Panc1 (cell line): ENCODE measurements at regions of chr16 and their contacts with region 1.

Region 1: DNA sequence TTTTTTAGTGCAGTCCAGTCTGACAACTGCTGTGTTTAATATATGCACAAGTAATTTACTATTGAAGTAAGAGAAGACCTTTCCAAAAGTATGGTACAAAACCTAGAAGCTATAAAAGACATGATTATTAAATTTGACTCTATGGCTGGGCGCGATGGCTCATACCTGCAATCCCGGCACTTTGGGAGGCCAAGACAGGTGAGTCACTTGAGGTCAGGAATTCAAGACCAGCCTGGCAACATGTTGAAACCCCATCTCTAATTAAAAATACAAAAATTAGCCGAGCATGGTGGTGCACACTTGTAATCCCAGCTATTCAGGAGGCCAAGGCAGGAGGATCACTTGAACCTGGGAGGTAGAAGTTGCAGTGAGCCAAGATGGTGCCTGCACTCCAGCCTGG is 41.4 kb upstream of the VWA3A start:
- DNase-seq: no peak
- ATAC-seq: no peak
- H3K4me3 ChIP-seq: no peak overlapping the region
- H3K27ac ChIP-seq: no peak overlapping the region
- H3K4me1 ChIP-seq: no peaks in the 10 kb centered on the region
- H3K27me3 ChIP-seq: no peaks in the 10 kb centered on the region
- CTCF ChIP-seq: no peak

Region 2: DNA sequence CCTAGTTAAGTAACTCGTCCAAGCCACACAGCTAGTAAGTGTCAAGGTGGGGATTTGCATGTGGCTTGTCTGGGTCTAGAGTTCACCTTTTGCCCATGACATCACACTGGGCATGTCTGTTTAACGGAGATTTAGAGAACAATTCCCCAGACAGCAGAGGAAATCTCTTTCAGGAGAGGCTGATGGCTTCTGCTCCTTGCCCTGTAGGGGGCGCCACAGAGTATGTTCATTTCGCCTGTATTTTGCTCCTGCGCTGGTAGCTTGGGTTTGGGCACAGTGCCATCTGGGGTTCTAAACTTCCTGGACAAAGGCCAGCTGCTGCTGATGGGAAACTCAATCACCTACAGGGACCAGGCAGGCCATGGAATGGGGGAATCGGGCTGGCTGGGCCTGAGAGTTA is 366.8 kb before region 1 on chr16:
- CTCF ChIA-PET with region 1: interaction called, 16 read pairs
- POLR2A ChIA-PET with region 1: no interaction called
- in situ Hi-C with region 1: no loop called
- intact Hi-C with region 1: no loop called
- DNase-seq: no peak
- ATAC-seq: no peak
- H3K4me3 ChIP-seq: no peak overlapping the region
- H3K27ac ChIP-seq: no peak overlapping the region
- H3K4me1 ChIP-seq: no peaks in the 10 kb centered on the region
- H3K27me3 ChIP-seq: peaks cover 7% of the 10 kb centered on the region; the same call in 1 of the 2 replicates
- CTCF ChIP-seq: peak; percentile 84

Region 3: GRCh38 chr16:22063888-22064467 is 13.0 kb after region 1 on chr16:
- CTCF ChIA-PET with region 1: no interaction called
- POLR2A ChIA-PET with region 1: interaction called, 10 read pairs
- in situ Hi-C with region 1: no loop called
- intact Hi-C with region 1: no loop called
- DNase-seq: no peak
- ATAC-seq: no peak
- H3K4me3 ChIP-seq: no peak overlapping the region
- H3K27ac ChIP-seq: no peak overlapping the region
- H3K4me1 ChIP-seq: no peaks in the 10 kb centered on the region
- H3K27me3 ChIP-seq: no peaks in the 10 kb centered on the region
- CTCF ChIP-seq: no peak